ENCODE measurements at regions of chr15 and their contacts with region 1.

Region 1: DNA sequence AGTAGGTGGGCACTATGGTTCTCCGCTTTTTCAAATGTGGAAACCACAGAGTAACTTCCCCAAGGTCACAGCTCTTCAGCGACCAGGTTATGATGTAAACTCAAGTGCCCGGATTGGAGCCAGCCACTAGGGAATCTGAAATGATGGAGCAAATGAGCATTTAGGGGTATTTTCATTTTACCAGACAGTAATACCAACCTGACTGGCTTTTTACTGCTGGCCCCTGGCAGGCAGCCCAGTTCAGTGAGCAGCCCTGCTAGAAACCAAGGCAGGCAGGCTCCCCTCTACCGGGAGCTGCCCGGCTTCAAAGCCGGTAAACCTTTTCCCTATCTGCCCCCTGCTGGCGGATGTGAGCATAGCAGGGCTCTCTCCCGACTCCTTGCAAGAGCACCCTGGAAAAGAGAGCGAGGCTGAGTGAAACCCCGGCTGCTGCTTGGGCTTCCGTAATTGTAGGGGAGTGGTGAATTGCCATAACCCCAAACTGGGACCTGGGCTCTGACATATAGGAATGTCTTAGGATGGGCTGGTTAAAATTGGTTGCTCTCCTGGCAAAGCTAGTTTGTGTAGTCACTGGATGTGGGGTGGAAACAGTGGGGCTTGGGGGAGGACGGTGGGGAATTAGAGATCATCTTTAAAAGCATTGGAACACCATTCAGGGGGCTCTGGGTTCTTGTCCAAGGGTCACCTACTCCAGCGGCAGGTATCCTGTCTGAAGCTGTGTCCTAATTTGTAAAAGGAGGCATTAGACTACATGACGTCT is 98.0 kb upstream of the TNFAIP8L3 start:
- DNase-seq: peak; percentile 81 to 84
- ATAC-seq: peak; percentile 91 to 98
- H3K4me3 ChIP-seq: no peak overlapping the region
- H3K27ac ChIP-seq: no peak overlapping the region
- H3K4me1 ChIP-seq: no peaks in the 10 kb centered on the region
- CTCF ChIP-seq: peak; percentile 92
- EP300 ChIP-seq: no peak
- POLR2A ChIP-seq: no peak
- RAD21 ChIP-seq: peak; percentile 81 to 88

Region 2: DNA sequence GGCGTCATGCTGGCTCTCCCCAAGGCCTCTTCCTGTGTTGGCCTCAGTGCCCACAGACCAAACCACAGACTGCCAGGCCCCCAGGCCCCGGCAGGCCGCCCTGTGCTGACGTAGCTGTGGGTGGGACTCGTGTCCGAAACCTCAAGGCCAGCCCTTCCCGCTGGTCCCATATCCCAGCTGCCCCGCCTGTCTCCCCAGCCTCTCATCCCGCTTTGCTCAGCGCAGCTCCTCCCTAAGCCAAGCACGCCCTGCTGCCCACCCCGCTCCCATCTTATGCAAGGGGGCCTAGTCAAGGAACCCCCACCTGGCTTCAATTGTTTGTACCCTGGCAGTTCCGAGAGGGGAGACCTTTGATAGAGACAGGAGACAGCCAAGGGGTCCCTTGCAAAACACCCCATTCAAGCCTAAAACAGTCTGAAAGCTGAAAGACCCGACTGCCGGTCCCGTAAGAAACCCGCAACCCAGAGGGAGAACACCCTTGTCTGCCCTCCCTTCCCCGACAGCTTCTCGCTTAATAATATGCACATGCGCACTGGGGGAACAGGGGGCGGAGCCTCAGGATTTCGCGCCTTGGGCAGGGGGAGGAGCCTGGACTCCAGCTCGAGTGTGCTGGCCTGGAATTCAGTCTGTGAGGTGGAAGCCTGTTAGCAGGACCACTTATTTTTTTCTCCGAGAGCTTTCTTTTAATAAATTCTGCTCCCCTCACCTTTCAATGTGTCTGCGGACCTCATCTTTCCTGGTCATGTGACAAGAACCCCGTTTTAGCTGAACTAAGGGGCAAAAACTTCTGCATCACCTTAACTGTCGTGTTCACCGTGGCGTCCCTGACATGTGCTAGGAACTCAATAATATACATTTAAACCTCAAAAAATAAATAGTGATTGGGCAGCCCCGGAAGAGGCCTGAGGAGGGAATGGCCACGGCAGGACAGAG is 115.2 kb before region 1 on chr15:
- CTCF ChIA-PET with region 1: no interaction called
- POLR2A ChIA-PET with region 1: no interaction called
- DNase-seq: no peak
- ATAC-seq: no peak
- H3K4me3 ChIP-seq: no peak overlapping the region
- H3K27ac ChIP-seq: no peak overlapping the region
- H3K4me1 ChIP-seq: no peaks in the 10 kb centered on the region
- CTCF ChIP-seq: no peak
- EP300 ChIP-seq: no peak
- POLR2A ChIP-seq: no peak
- RAD21 ChIP-seq: no peak

Region 3: DNA sequence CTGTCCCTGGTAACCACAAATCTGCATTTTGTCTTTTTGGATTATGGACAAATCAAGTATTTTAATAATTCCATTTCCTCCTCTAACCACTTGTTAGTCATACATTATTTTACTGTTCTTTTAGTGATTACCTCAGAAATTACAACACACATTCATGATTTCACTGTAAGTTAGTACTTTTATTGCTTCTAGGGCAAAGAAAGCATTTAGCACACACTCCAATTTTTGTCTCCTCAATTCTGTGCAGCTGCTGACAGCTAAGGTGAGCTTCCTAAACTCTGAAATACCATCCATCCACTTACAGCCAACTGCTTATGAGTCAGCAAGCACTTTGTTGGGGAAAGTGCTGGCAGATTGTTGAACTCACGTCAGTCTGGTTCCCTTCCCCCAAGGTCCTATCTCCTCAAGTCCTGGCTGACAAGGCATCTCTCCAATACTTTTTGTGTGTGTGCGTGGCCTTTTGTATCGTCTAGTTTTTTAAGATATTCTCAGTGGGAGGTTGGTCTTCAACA is 48.6 kb before region 1 on chr15:
- CTCF ChIA-PET with region 1: interaction called, 16 read pairs
- POLR2A ChIA-PET with region 1: no interaction called
- DNase-seq: peak; percentile 25 to 57
- ATAC-seq: peak; percentile 68 to 74; a peak in 5 of 6 replicates
- H3K4me3 ChIP-seq: no peak overlapping the region
- H3K27ac ChIP-seq: peak overlapping the region in 1 of 2 experiments; percentile 25; a peak in 2 of 6 replicates
- H3K4me1 ChIP-seq: peaks cover 9% of the 10 kb centered on the region; the same call in 1 of the 3 replicates
- CTCF ChIP-seq: no peak
- EP300 ChIP-seq: no peak
- POLR2A ChIP-seq: no peak
- RAD21 ChIP-seq: no peak

Region 4: DNA sequence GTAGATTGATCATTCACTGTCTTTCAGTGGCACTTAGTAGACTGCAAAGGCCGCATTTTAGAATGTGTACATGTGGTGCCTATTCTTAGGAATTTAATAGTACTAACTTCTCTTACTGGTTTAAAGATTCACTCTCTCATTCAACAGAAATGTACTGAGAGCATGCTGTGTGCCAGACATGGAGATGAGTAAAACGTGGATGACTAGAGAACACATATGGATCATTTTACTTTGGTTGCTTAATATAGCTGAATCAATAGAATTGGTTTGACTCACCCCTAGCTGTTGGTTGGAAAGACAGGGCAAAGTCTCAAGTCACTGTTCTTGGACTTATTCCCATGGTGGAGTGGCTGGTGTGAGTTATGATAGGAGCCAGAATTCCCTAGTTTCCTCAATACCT is 11.1 kb after region 1 on chr15:
- CTCF ChIA-PET with region 1: interaction called, 74 read pairs
- POLR2A ChIA-PET with region 1: no interaction called
- DNase-seq: peak in 1 of 2 experiments; percentile 19
- ATAC-seq: peak; percentile 51 to 66; a peak in 5 of 6 replicates
- H3K4me3 ChIP-seq: no peak overlapping the region
- H3K27ac ChIP-seq: no peak overlapping the region
- H3K4me1 ChIP-seq: 0 out of 3 replicates have a peak, but pooled peaks cover 12% of the 10 kb centered on the region
- CTCF ChIP-seq: no peak
- EP300 ChIP-seq: no peak
- POLR2A ChIP-seq: no peak
- RAD21 ChIP-seq: no peak

Region 5: DNA sequence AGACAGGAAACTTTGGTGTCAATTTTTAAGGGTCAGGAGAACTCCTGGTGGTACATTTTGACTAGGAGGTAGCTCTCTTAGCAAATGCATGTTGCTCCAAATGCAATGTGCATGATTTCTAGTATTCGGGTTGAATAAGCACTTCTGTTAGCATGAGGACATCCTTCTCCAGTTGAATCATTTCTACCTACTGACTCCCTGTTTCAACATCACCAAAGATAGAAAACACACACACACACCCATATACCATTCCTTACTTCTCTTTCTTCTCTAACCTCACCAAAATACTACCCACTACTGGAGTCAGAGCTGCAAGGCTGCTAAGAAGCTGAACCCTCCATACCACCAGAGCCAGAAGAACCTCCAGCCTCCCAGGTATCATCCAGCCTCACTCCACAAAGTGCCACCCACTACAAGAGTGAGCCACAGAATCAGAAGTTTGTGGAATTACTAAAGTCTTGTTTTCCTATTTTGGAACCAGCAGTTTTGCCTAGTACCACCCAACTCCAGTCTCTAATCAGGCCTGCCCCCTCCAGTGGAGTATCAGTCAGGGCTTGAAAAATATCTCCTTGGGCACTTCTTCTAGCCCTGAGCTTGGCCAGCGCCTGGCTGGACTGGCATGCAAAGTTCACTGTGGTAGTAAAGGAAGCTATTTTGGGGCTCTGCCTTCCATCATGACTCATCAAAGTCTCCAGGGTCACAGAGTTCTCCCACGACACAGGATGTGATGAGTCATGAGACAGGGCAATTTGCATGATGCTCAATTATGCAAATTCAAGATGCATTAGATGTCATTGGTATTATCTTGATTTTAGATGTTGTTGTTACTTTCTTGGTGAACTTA is 35.5 kb after region 1 on chr15:
- CTCF ChIA-PET with region 1: interaction called, 11 read pairs
- POLR2A ChIA-PET with region 1: no interaction called
- DNase-seq: peak; percentile 69 to 72
- ATAC-seq: peak; percentile 71 to 73
- H3K4me3 ChIP-seq: no peak overlapping the region
- H3K27ac ChIP-seq: peak overlapping the region; percentile 31 to 68; a peak in 5 of 6 replicates
- H3K4me1 ChIP-seq: peaks cover 14% of the 10 kb centered on the region
- CTCF ChIP-seq: no peak
- EP300 ChIP-seq: no peak
- POLR2A ChIP-seq: no peak
- RAD21 ChIP-seq: no peak

Region 6: DNA sequence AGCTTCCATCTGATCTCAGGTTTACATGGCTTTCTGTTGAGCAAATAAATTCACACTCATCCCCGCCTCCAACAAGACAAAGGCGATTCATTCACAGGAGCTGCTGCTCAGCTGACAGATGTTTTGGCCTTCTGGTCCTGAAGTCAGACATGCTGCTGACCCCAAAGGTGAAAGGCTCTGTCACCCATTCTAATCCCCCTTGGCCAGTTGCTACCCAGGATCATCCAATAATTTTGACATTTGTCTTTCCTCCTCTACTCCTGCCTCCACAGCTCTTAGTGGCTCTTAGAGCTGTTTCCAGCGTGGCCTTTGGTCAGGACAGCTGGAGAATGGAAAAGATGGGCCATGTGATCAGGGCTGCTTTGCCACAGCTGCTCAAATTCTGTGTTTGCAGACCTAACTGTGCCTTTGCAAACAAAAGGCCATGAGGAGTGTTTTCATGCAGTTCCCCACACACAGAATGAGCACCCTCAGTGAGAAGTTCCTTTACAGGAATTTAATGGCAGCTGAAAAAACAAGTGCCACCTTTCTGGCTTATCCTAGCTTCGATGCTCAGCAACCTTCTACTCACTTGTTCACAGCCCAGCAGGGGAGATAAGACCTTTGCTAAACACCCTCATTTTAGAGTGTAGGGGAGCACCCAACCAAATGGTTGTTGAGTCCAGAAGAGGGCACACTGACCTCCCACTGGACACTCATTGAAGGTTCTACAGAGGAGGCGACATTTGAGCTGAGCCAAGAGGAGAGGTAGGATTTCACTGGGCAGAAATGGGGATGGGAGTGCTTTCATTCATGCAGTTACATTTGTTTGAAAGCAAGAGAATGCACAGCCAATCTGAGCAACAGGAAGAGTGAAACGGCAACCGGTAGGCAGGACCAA is 106.7 kb after region 1 on chr15:
- CTCF ChIA-PET with region 1: no interaction called
- POLR2A ChIA-PET with region 1: no interaction called
- DNase-seq: no peak
- ATAC-seq: no peak
- H3K4me3 ChIP-seq: no peak overlapping the region
- H3K27ac ChIP-seq: no peak overlapping the region
- H3K4me1 ChIP-seq: no peaks in the 10 kb centered on the region
- CTCF ChIP-seq: no peak
- EP300 ChIP-seq: no peak
- POLR2A ChIP-seq: no peak
- RAD21 ChIP-seq: no peak